Sciatic nerve (tissue), 2 donors: ENCODE measurements at regions of chr6 and their contacts with region 1.

Region 1: DNA sequence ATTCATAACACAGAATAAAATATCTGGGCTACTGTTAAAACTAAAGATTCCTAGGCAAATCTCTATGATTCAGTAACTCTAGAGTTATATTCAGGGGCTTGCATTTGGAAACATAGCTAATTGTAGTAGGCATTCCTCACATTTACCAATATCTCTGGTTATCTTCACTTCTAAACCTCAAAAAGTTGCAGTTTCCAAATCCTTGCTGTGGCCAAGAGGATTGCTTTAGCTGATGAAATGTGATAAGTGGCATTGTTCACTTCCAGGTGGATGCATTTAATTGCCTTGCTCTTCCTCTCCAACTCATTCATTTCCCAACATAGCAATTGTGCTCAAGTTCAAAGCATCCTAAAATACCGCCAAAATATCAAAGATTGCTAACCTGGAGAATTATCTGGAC is 246.6 kb downstream of the GRIK2 start:
- DNase-seq: no peak
- ATAC-seq: no peak

Region 2: DNA sequence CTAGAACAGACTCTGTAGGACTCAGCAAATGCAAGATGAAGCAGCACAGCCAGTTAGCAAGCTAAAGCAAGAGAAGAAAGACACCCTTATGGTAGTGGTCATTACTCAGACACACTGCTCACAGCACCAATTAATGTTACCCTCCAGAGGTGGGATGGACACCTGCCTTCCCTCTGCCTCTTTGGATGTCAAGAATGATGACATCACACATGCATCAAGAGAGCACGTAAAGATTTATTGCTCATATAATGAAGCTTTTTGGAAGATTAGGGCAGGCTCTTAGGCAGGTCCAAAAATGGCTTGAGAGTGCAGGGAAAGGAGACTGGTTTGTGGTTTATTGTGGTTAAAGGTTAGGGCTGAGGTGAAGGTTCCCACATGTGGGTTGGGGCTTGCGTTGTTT is 1896.5 kb before region 1 on chr6:
- intact Hi-C with region 1: loop called (anchors 5 kb)
- DNase-seq: no peak
- ATAC-seq: no peak

Region 3: DNA sequence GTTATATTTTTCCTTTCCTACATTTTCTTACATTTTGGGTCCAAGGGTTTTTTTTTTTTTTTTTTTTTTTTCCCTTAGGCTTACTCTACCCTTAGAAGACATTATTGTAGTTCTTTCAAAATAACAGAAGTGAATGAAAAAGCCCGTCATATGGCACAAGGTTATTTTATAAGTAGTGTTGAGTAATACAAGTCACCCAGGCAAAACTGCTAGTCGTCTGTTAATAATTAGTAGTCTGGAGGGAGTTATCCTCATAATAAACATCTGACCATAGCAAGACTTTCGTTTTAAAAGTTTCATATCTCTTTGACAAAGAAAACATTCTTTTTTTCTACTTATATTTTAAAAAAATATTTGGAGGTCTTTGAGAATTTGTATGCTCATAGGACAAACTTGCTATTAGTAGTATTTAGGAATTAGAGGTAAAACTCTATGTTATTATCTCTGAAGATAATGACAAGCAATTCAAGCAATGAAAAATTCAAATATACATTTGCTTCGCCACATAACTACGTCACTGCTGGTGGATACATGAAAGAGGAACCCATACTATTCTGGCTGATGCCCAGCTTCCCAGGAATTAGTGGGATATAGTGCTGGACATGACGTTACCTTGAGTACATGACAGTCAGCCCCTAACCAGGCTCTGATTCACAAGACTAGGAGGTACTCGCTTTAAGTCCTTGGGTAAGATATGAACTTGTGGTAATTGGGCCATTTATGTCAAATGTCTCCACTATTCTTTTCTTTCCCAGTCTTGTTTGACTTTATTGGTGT is 286.2 kb after region 1 on chr6:
- intact Hi-C with region 1: no loop called
- DNase-seq: no peak
- ATAC-seq: no peak